ENCODE measurements at regions of chr5 and their contacts with region 1.

Region 1: GRCh38 chr5:149114403-149115312 is 26.6 kb upstream of the ABLIM3 start:
- DNase-seq: peak; percentile 69
- H3K4me3 ChIP-seq: no peak overlapping the region
- H3K27ac ChIP-seq: no peak overlapping the region
- H3K27me3 ChIP-seq: no peaks in the 10 kb centered on the region
- CTCF ChIP-seq: peak; percentile 87

Region 2: DNA sequence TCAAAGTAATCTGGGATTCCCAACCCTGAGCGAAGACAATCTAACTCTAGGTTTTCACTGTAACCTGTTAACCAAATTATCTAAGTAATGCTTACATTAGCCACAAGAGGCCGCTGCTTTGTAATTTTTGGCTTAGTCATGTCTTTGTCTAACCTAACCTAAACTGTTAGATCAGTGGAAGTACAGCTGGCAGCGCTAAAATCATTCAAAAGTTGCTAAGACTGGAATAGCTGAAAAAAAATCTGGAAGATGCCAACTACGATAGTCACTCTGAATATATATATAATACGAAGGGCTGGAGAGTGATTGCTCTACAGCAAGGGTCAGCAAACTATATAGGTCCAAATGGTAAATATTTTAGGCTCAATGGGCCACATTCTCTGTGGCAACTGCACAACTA is 670.7 kb before region 1 on chr5:
- CTCF ChIA-PET with region 1: interaction called, 60 read pairs
- POLR2A ChIA-PET with region 1: no interaction called
- DNase-seq: peak; percentile 49
- H3K4me3 ChIP-seq: no peak overlapping the region
- H3K27ac ChIP-seq: no peak overlapping the region
- H3K27me3 ChIP-seq: no peaks in the 10 kb centered on the region
- CTCF ChIP-seq: peak; percentile 71

Region 3: GRCh38 chr5:148697180-148697808 is 417.4 kb before region 1 on chr5:
- CTCF ChIA-PET with region 1: no interaction called
- POLR2A ChIA-PET with region 1: no interaction called
- DNase-seq: peak; percentile 2
- H3K4me3 ChIP-seq: no peak overlapping the region
- H3K27ac ChIP-seq: no peak overlapping the region
- H3K27me3 ChIP-seq: no peaks in the 10 kb centered on the region
- CTCF ChIP-seq: no peak

Region 4: DNA sequence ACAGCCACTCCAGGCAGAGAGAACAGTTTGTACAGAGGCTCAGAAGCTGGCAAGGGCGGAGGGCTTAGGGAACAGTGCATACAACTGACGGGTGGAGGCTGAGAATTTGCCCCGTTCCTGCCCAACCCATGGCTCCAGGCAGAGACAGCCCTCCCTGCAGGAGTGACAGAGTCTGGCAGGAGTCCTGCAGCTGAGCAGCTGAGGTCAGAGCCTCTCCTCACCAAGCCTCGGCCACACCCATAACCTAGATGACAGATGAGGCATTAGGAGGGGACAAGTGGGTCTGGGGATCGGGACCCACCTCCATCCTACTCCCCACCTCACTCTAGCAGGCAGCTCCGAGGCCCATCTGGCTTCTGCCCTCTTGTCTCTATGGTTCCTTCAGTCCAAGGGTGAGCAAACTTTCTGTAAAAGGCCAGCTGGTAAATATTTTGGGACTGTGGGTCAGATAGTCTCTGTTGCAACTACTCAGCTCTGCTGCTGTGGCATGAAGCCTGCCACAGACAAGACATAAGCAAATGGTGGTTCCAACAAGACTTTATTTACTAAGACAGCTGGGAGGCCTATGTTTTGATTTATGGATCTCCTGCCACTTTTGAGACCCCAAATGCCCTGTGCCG is 135.4 kb before region 1 on chr5:
- CTCF ChIA-PET with region 1: interaction called, 10 read pairs
- POLR2A ChIA-PET with region 1: no interaction called
- DNase-seq: no peak
- H3K4me3 ChIP-seq: no peak overlapping the region
- H3K27ac ChIP-seq: no peak overlapping the region
- H3K27me3 ChIP-seq: no peaks in the 10 kb centered on the region
- CTCF ChIP-seq: no peak

Region 5: GRCh38 chr5:149005077-149005892 is 109.4 kb before region 1 on chr5:
- CTCF ChIA-PET with region 1: interaction called, 19 read pairs
- POLR2A ChIA-PET with region 1: no interaction called
- DNase-seq: no peak
- H3K4me3 ChIP-seq: no peak overlapping the region
- H3K27ac ChIP-seq: peak overlapping the region; percentile 49
- H3K27me3 ChIP-seq: no peaks in the 10 kb centered on the region
- CTCF ChIP-seq: no peak

Region 6: GRCh38 chr5:149053072-149053695 is 61.5 kb before region 1 on chr5:
- CTCF ChIA-PET with region 1: interaction called, 33 read pairs
- POLR2A ChIA-PET with region 1: no interaction called
- DNase-seq: no peak
- H3K4me3 ChIP-seq: no peak overlapping the region
- H3K27ac ChIP-seq: no peak overlapping the region
- H3K27me3 ChIP-seq: no peaks in the 10 kb centered on the region
- CTCF ChIP-seq: no peak

Region 7: DNA sequence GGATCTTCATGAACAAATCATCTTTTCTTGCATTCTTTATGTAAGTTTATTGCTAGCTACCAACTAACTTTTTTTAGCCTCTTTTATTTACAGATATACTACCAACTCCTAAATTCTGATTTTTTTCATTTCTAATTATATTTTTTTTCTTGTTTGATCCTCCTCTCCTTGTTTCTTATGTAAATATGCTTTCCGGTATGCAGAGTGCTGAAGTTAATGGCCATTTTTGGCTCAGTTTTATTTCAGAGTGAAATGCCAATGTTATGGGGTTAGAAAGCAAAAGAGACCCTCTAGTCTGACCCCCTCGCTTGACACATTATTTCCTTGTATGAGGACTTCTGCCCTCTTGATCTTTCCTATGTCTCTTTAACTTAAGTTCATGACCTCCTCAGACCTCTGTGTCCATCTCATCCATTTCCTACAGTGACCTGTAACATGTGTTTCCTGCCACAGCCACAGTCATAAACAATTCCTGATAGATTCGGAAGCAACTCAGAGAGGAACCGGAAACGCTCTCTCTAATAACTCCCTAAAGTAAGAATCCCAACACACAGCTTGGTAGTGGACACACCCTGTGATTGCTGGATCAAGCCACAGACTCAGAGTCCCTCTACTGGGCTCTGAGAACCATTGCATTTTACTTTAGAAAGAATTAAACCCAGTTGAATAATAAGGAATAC is 114.1 kb after region 1 on chr5:
- CTCF ChIA-PET with region 1: interaction called, 31 read pairs
- POLR2A ChIA-PET with region 1: no interaction called
- DNase-seq: peak; percentile 82
- H3K4me3 ChIP-seq: no peak overlapping the region
- H3K27ac ChIP-seq: no peak overlapping the region
- H3K27me3 ChIP-seq: no peaks in the 10 kb centered on the region
- CTCF ChIP-seq: peak; percentile 90